WTC11 (cell line): ENCODE measurements at regions of chr6 and their contacts with region 1.

Region 1: DNA sequence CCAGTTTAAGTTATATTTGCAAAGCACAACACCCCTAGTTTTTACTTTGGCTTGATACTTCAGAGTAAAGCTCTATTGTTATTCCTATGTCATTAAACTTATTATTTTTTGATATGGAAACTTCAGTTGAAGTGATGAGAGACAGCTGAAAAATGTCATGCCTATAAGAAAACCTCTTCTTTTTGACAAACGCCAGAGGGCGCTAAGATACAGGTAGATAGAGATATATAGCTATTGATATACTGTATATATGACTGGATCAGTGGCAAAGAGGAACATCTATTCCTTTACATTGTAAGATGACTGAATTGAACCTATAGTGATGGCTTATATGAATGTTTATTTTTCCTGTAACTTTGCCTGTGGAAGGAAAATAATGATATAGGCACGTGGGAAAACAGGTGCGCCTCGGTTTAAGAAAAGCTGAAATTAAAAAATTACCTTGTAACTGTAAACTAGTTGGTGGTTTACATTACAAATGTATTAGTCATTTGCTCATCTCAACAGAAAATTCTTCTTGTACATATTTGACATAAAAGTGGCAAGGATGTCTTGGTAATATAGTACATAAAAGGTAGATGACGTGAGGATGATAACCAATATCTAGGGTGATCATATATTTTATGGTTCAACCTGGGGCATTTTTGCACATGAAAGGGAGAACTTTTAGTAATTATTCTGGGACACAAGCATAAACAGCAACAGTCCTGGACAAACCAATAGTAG is 74.1 kb downstream of the LAMA4 start:
- DNase-seq: no peak
- ATAC-seq: peak; percentile 65; the same call in 1 of the 2 replicates
- H3K4me3 Mint-ChIP-seq: no peak overlapping the region
- H3K27ac Mint-ChIP-seq: no peak overlapping the region
- H3K4me1 Mint-ChIP-seq: no peaks in the 10 kb centered on the region
- H3K27me3 Mint-ChIP-seq: no peaks in the 10 kb centered on the region
- CTCF ChIP-seq: peak; percentile 63

Region 2: DNA sequence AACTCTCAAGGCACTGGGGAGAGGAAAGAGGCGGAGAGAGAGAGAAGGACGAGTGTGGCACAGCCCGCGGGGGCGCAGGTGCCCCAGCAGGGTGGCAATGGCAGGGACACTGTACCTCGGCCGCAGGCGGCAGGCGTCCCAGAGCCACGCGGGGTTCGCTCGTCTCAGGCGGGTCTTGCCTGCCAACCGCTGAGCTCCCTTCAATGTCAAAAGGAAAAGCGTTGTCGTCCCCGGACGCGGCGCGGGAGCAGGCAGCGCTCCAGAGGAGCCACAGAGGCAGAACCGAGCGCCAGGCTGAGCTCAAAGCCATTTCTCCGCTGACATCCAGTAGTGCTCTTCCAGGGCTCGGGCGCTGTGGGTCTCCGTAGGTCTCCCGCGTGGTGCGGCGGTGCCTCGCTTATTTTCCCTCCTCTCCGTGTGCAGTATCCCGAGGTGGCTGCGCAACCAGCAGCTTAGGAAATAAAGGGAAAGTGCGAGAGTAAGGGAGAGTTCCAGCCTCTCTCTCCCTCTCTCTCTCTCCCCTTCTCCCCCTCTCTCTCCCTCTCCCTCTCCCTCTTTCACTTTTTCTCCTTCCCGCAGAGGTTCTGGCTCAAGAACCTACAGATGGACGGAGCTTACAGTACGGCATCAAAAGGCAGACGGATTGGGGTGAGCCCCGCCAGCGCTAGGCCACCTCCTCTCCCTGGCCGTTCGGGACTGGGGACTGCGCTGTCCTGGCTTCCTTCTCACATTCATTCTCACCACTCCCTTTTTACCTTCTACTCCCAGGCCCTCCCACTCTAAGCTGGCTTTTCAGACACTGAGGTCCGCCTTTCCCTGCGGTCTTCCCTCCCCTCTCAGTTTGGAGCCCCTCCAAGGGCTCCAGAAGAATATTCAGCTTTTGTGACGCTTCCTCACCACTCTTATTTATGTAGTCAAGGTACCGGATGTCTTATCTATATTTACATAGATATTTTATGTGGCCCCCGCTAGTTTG is 73.9 kb after region 1 on chr6 and contains the start of gene LAMA4:
- CTCF ChIA-PET with region 1: interaction called, 13 read pairs
- POLR2A ChIA-PET with region 1: no interaction called
- DNase-seq: peak; percentile 39
- ATAC-seq: peak; percentile 83
- H3K4me3 Mint-ChIP-seq: peak within 1 kb of the TSS; percentile 92
- H3K27ac Mint-ChIP-seq: no peak within 1 kb of the TSS
- H3K4me1 Mint-ChIP-seq: peaks cover 25% of the 10 kb centered on the region
- H3K27me3 Mint-ChIP-seq: peaks cover 44% of the 10 kb centered on the region
- CTCF ChIP-seq: no peak
- total RNA-seq, gene LAMA4: 1.6 to 2.6 TPM (median 1.7 TPM) in 3 replicates

Region 3: DNA sequence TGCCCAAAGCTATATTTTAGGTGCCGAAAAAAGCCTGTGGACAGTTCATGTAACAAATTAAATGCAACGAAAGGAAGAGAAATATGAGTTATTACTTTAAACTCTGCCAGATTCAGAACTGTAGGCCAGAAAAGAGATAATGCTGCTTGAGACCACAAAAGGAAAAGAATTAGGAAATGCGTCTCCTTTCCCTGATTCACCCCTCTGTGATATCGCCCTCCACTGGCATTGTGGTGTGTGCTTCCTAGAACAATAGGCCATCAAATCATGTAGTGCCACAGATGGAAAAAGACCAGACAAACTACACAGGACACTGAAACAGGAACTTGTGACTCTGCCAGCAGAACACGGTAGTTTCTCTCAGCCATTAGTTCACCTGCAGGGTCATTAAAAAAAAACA is 88.9 kb after region 1 on chr6:
- CTCF ChIA-PET with region 1: interaction called, 38 read pairs
- POLR2A ChIA-PET with region 1: no interaction called
- DNase-seq: no peak
- ATAC-seq: peak; percentile 60
- H3K4me3 Mint-ChIP-seq: no peak overlapping the region
- H3K27ac Mint-ChIP-seq: no peak overlapping the region
- H3K4me1 Mint-ChIP-seq: 0 out of 2 replicates have a peak, but pooled peaks cover 4% of the 10 kb centered on the region
- H3K27me3 Mint-ChIP-seq: no peaks in the 10 kb centered on the region
- CTCF ChIP-seq: no peak

Region 4: DNA sequence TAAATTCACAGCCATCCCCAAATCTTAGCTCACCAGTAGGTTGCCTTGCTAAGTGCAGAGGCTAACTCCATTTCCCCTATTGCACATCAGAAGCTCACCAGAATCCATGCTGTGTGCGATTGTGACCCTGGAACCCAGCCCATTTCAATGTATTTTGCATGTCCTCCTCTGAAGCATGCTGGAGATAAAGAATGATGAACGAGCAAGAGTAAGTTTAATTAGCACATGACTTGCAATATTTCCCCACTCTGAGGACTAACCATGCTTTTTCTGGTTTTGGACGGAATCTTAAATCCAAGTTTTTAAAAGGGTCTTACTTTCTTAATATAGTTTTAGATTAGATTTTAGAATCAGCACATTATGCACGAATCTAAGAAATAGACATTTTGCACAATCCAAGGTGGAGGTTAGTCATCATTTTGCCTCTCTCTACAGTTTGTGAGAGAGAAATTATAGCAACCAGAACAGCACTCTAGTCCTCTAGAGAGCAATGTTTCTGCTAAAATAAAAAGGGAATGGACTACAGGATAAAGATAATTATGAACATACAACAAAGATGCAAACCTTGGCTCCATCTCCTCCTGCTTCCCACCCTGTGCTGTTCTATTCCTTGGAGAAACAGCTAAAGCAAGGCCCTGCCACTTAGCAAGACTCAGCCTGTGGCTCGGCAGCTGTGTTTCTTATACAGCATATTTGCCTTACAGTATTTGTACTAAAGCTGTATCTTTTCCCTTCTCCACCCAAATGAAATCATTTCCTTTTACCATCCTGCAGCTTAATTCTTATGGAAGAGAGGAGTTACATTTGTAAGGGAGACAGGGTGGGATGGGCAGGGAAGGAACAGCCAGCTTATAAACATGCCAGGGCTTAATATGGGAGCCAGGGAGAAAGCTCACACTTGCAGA is 99.0 kb after region 1 on chr6:
- CTCF ChIA-PET with region 1: interaction called, 11 read pairs
- POLR2A ChIA-PET with region 1: no interaction called
- DNase-seq: no peak
- ATAC-seq: no peak; the same call in 1 of the 2 replicates
- H3K4me3 Mint-ChIP-seq: no peak overlapping the region
- H3K27ac Mint-ChIP-seq: no peak overlapping the region
- H3K4me1 Mint-ChIP-seq: peaks cover 7% of the 10 kb centered on the region
- H3K27me3 Mint-ChIP-seq: no peaks in the 10 kb centered on the region
- CTCF ChIP-seq: no peak

Region 5: DNA sequence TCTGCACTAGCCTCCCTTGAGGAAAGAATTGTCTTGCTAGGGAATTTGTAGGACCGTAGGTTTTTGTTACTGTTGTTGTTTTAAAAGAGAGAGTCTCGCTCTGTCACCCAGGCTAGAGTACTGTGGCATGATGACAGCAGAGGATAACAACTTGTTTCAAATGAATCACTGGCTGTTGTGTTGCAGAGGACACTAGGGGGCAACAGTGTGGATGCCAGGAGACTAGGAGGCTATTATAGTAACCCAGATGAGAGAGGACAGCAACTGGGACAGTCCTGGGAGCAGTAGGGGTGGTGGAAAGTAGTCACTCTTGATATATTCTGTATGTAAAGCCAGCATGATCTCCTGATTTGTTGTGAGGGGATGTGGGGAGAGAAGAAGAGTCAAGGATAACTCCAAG is 115.9 kb after region 1 on chr6:
- CTCF ChIA-PET with region 1: interaction called, 16 read pairs
- POLR2A ChIA-PET with region 1: no interaction called
- DNase-seq: peak; percentile 43
- ATAC-seq: peak; percentile 99
- H3K4me3 Mint-ChIP-seq: no peak overlapping the region
- H3K27ac Mint-ChIP-seq: no peak overlapping the region
- H3K4me1 Mint-ChIP-seq: no peaks in the 10 kb centered on the region
- H3K27me3 Mint-ChIP-seq: no peaks in the 10 kb centered on the region
- CTCF ChIP-seq: no peak

Region 6: GRCh38 chr6:112311950-112312547 is 131.8 kb after region 1 on chr6:
- CTCF ChIA-PET with region 1: interaction called, 48 read pairs
- POLR2A ChIA-PET with region 1: no interaction called
- DNase-seq: no peak
- ATAC-seq: no peak; the same call in 1 of the 2 replicates
- H3K4me3 Mint-ChIP-seq: no peak overlapping the region
- H3K27ac Mint-ChIP-seq: no peak overlapping the region
- H3K4me1 Mint-ChIP-seq: 0 out of 2 replicates have a peak, but pooled peaks cover 3% of the 10 kb centered on the region
- H3K27me3 Mint-ChIP-seq: no peaks in the 10 kb centered on the region
- CTCF ChIP-seq: no peak; the same call in 1 of the 2 replicates